ENCODE measurements at regions of chr7 and their contacts with region 1.

Region 1: GRCh38 chr7:74275401-74275881 is 13.8 kb upstream of the CLIP2 start:
- DNase-seq: no peak
- ATAC-seq: no peak
- H3K4me3 ChIP-seq: no peak overlapping the region
- H3K27ac ChIP-seq: peak overlapping the region in 1 of 12 donors; percentile 24
- H3K4me1 ChIP-seq: peaks cover 0 to 41% (median 24%) of the 10 kb centered on the region in 12 donors
- H3K27me3 ChIP-seq: no peaks in the 10 kb centered on the region
- CTCF ChIP-seq: peak; percentile 11 to 52 (median 36)
- POLR2A ChIP-seq: no peak

Region 2: GRCh38 chr7:74254129-74254857 is 21.1 kb before region 1 on chr7 and contains the start of gene RFC2:
- intact Hi-C with region 1: loop called in 2 of 10 experiments (anchors 1 to 2 kb)
- DNase-seq: peak; percentile 97 to 99 (median 98)
- ATAC-seq: peak; percentile 98 to 100 (median 100)
- H3K4me3 ChIP-seq: peak within 1 kb of the TSS; percentile 64 to 98 (median 81)
- H3K27ac ChIP-seq: peak within 1 kb of the TSS; percentile 80 to 99 (median 95)
- H3K4me1 ChIP-seq: peaks cover 0 to 38% (median 24%) of the 10 kb centered on the region in 12 donors
- H3K27me3 ChIP-seq: no peaks in the 10 kb centered on the region
- CTCF ChIP-seq: peak in 11 of 12 donors; percentile 9 to 47 (median 27)
- POLR2A ChIP-seq: peak in 1 of 2 donors; percentile 64
- total RNA-seq, gene RFC2: 7.8 to 20.9 (median 12.2) TPM

Region 3: GRCh38 chr7:74343281-74344127 is 68.1 kb after region 1 on chr7:
- intact Hi-C with region 1: no loop called
- DNase-seq: no peak
- ATAC-seq: peak in 2 of 4 donors; percentile 34 to 60
- H3K4me3 ChIP-seq: no peak overlapping the region
- H3K27ac ChIP-seq: no peak overlapping the region
- H3K4me1 ChIP-seq: no peaks in the 10 kb centered on the region
- H3K27me3 ChIP-seq: no peaks in the 10 kb centered on the region
- CTCF ChIP-seq: no peak
- POLR2A ChIP-seq: no peak